Activated CD4-positive, alpha-beta T cell treated with anti-CD3 and anti-CD28 coated beads, Interleukin-2, amount 10 ng/mL, durations not matched to agents 24 days and 14 days (primary cell): ENCODE measurements at regions of chr19 and their contacts with region 1.

Region 1: DNA sequence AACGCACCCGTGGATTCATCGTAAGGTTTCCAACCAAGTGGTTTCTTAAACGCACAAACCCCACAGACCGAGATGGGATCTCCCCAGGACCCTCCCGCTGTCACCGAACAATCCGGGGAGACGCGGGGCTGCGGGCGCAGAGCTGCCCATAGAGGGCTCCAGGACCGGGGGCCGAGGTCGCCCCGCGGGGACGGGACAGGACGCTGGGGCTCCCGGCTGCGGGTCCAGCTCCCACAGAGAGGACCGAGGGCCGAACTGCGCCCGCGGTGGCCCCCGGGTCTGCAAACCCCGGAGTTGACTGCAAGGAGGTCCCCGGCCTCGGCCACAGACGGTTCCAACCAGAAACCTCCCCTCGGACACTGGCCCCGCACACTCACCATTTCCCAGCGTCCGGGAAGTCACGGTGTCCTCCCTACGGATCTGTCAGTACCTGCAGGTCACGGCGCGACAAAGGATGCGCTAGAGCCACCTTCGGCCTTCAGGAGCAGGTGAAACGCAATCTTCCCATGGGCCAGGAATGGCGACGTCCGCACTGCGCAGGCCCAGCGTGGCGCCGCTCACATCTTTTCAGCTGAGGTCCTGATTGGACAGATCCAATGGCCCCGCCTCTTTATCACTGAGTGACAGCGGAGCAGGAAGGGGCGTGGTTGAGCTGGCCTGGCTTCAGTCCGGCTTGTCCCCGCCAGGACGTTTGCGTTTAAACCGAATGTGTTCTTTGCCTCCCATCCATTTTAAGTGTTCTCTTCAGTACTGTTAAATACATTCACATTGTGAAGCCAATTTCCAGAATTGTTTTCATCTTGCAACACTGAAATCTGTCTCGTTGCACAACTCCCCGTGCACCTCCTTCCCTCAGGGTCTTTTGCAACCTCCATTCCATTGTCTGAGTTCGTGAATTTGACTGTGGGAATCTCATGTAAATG is at the start of gene ZNF14:
- DNase-seq: peak; percentile 96
- H3K4me3 Mint-ChIP-seq: peak within 1 kb of the TSS; percentile 99
- H3K27ac Mint-ChIP-seq: peak within 1 kb of the TSS; percentile 94
- H3K4me1 Mint-ChIP-seq: peaks cover 13% of the 10 kb centered on the region
- H3K27me3 Mint-ChIP-seq: no peaks in the 10 kb centered on the region
- total RNA-seq, gene ZNF14: 4.7 and 4.8 TPM in 2 replicates

Region 2: DNA sequence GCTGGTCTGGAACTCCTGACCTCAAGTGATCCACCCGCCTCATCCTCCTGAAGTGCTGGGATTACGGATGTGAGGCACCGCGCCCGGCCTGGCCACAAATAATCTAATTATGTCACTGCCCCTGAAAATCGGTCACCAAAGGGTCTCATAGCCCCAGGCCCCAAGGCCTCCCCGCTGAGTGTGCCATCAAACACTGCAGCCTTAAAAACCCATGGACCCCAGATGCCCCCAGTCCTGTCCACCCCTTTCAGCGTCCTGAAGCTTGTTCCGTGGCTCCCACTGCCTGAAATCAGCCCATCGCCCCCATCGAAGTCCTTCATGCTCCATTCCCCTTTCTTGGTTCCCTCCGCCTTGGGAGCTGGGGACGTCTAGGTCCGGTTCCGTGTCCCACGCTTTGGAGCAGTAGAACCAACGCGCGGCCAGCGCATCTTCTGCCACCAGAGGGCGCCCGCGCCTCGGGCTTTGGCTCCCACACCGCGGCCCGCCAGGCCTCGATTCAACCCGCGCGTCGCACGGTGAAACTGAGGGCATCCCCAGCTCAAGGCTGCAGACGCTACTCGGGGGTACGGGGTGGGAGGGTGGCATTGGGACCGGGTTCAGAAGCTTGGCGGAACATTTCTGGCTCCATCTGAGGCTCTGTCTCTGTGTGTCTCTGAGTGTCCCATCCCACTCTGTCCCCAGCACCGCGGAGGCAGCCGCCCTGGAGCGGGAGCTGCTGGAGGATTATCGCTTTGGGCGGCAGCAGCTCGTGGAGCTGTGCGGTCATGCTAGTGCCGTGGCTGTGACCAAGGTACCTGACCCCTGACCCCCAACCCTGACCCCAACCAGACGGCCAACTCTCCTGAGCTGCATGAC is 200.7 kb before region 1 on chr19:
- intact Hi-C with region 1: loop called (anchors 10 kb)
- DNase-seq: peak; percentile 96
- H3K4me3 Mint-ChIP-seq: peak overlapping the region; percentile 14
- H3K27ac Mint-ChIP-seq: peak overlapping the region; percentile 47
- H3K4me1 Mint-ChIP-seq: peaks cover 16% of the 10 kb centered on the region
- H3K27me3 Mint-ChIP-seq: peaks cover 3% of the 10 kb centered on the region

Region 3: GRCh38 chr19:19696386-19696785 is 36.5 kb before region 1 on chr19:
- intact Hi-C with region 1: no loop called
- DNase-seq: no peak
- H3K4me3 Mint-ChIP-seq: no peak overlapping the region
- H3K27ac Mint-ChIP-seq: no peak overlapping the region
- H3K4me1 Mint-ChIP-seq: no peaks in the 10 kb centered on the region
- H3K27me3 Mint-ChIP-seq: no peaks in the 10 kb centered on the region

Region 4: GRCh38 chr19:19776041-19777008 is 43.5 kb after region 1 on chr19:
- intact Hi-C with region 1: loop called (anchors 2 kb)
- DNase-seq: peak; percentile 98
- H3K4me3 Mint-ChIP-seq: peak overlapping the region; percentile 93
- H3K27ac Mint-ChIP-seq: peak overlapping the region; percentile 85
- H3K4me1 Mint-ChIP-seq: peaks cover 24% of the 10 kb centered on the region
- H3K27me3 Mint-ChIP-seq: no peaks in the 10 kb centered on the region

Region 5: DNA sequence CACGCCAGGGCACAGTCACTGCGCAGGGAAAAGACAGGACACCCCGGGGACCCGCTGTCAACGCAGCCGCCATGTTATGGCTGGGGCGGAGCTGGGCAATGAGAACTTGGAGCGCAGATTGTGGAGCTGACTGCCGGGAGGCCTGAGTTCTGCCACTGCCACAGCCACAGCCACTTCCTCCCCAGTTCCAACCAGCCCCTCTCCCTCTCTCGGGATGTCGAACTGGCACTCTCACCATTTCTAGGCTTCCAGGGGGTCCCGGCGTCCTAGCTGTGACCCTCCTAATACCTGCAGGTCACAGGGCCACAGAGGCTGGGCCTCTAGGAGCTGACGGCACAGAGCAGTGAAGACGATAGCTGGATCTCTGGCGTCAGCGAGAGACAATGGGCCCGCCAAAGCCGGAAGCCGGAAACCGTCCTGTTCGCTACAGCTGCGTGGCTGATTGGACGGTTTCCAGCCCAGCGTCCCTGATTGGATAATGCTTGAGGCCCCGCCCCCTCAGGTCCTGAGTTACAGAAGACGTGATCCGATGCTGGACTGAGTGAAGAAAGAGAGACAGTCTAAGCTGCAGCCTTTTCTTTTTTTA is 88.6 kb after region 1 on chr19 and contains the start of gene ZNF506:
- intact Hi-C with region 1: loop called (anchors 1 kb)
- DNase-seq: peak; percentile 97
- H3K4me3 Mint-ChIP-seq: peak within 1 kb of the TSS; percentile 98
- H3K27ac Mint-ChIP-seq: peak within 1 kb of the TSS; percentile 99
- H3K4me1 Mint-ChIP-seq: peaks cover 12% of the 10 kb centered on the region
- H3K27me3 Mint-ChIP-seq: no peaks in the 10 kb centered on the region
- total RNA-seq, gene ZNF506: 13.3 and 16.2 TPM in 2 replicates

Region 6: GRCh38 chr19:19900729-19901444 is 168.0 kb after region 1 on chr19 and contains the start of gene ZNF93:
- intact Hi-C with region 1: loop called (anchors 5 kb)
- DNase-seq: peak; percentile 96
- H3K4me3 Mint-ChIP-seq: peak within 1 kb of the TSS; percentile 96
- H3K27ac Mint-ChIP-seq: peak within 1 kb of the TSS; percentile 97
- H3K4me1 Mint-ChIP-seq: peaks cover 12% of the 10 kb centered on the region
- H3K27me3 Mint-ChIP-seq: no peaks in the 10 kb centered on the region
- total RNA-seq, gene ZNF93: 7.2 and 8.3 TPM in 2 replicates